Tibial artery (tissue), 4 donors: ENCODE measurements at regions of chr17 and their contacts with region 1.

Region 1: DNA sequence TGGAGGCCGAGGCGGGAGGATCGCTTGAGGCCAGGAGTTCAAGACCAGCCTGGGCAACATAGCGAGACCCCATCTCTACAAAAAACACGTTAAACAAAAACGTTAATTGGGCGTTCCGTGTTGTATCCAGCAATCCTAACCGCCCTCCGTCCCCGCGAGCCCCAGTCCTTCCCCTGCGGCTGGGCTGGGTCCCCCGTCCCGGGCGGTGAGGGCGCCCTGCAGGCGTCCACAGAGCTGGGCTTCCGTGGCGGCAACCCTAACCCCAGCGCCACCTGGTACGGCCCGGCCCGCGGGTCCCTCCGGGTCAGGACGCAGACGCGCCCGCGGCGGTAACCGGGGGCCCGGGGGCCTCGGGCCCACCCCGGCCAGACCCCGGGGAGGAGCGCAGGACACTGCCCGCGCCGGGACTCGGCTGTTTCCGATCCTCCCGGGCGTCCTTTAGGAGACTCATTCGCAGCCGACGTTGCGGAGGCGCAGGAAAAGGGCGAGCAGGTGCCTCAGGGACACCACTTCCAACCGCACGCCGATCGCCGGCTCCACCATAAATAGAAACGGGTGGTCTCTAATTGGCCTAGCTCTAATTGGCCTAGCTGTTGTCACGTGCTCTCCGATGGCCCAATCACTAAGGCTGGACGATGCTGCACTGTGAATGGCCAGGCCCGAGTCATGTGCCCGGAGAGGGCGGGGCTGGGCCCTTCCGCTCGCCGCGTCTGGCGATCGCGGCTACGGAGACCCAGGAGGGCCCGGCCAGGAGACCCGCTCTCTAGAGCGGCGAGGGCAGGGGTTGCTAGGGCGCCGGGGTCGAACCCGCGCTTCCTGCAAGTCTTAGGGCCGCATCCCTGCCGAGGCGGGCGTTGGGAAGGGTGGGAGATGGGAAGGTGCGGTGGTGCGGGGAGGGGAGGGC is 19.0 kb upstream of the CSNK1D start:
- DNase-seq: peak; percentile 97 to 98
- H3K4me3 ChIP-seq: peak overlapping the region; percentile 69 to 84
- H3K27ac ChIP-seq: peak overlapping the region; percentile 97 to 98
- H3K4me1 ChIP-seq: peaks cover 0 to 27% (median 16%) of the 10 kb centered on the region in 4 donors
- H3K27me3 ChIP-seq: no peaks in the 10 kb centered on the region
- CTCF ChIP-seq: no peak

Region 2: DNA sequence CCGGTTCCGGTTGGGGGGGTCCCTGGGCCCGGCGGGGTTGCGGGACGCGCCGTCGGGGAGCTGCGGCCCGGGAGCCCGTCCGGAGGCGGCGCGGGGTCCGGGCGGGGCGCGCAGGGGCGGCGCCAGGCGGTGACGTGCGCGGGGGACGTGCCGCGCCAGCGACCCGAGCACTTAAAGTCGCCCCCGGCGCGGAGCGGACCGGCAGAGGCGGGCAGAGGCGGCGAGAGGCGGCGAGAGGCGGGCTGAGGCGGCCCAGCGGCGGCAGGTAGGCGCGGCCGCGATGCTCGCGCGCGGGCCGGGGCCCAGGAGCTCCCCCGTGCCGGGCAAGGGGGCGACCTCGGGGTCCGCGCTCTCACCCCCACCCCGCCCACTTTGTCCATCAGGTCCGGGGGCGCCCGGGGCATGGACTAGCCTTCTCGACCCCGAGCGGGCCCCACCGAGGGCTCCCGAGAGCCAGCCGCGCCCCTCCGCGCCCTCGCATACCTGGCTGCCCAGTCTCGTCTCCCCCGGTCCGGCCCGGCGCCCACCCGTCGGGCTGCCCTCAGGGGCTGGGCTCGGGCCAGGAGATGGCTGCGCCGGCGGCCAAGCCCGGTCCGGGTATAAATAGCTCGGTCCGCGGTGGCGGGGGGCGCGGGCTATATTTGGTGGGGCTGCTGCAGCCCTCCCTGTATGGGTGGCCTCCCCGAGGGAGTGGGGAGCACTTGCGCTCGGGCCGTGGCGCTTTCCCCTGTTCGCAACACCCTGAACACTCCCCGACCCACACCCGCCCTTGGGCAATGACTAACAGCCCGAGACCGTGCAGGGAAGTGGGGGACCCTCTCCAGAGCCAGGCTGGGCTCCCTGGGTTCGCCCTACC is 63.4 kb before region 1 on chr17 and contains the start of gene SLC16A3:
- intact Hi-C with region 1: no loop called
- DNase-seq: peak in 1 of 2 donors; percentile 76
- H3K4me3 ChIP-seq: peak within 1 kb of the TSS; percentile 56 to 58
- H3K27ac ChIP-seq: peak within 1 kb of the TSS; percentile 82 to 92
- H3K4me1 ChIP-seq: peaks cover 0 to 53% (median 42%) of the 10 kb centered on the region in 4 donors
- H3K27me3 ChIP-seq: peaks cover 0 to 33% of the 10 kb centered on the region in 2 donors
- CTCF ChIP-seq: no peak

Region 3: DNA sequence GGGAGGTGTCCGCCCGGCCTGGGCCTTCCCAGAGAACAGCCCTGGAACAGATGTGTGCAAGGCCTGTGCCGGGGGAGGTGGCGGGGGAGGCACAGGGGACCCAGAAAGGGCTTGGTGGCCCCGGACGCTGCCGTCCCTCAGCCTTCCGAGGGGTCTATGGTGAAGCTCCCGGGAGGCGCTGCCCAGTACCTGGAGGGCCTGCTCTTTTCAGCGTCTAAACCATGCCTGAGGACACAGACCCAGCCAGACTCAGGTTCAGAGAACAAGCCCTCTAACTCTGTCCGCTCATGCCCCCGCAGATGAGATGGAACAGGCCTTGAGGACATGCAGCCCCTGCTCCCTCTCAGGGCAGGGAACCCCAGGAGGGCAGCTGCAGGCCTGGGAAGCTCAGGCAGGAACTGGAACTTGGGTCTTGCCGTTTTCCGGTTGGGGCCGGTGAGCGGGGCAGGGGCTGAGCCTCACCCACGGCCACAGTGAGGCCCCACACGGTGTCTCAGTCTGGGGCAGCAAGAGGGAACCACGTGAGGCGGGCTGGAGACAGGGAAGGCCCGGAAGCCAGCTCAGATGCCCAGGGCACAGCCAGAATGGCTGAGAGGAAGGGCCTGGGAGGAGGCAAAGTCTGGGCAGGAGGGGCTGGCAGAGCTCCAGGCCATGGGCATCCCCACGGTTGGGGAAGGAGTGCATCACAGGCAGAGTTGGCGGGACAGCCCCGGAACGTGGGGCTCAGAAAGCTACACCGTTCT is 51.1 kb before region 1 on chr17:
- intact Hi-C with region 1: loop called (anchors 10 kb)
- DNase-seq: peak; percentile 88 to 97
- H3K4me3 ChIP-seq: no peak overlapping the region
- H3K27ac ChIP-seq: peak overlapping the region; percentile 84 to 89
- H3K4me1 ChIP-seq: peaks cover 20 to 81% (median 73%) of the 10 kb centered on the region in 4 donors
- H3K27me3 ChIP-seq: no peaks in the 10 kb centered on the region
- CTCF ChIP-seq: no peak